ENCODE measurements at regions of chr11 and their contacts with region 1.

Region 1: GRCh38 chr11:114762408-114762807 is 84.1 kb downstream of the NXPE2 start:
- DNase-seq: peak; percentile 67
- ATAC-seq: peak; percentile 85 to 91

Region 2: GRCh38 chr11:114280696-114281095 is 481.7 kb before region 1 on chr11:
- intact Hi-C with region 1: loop called in 1 of 2 experiments (anchors 5 kb)
- DNase-seq: peak; percentile 75
- ATAC-seq: peak; percentile 93 to 94

Region 3: DNA sequence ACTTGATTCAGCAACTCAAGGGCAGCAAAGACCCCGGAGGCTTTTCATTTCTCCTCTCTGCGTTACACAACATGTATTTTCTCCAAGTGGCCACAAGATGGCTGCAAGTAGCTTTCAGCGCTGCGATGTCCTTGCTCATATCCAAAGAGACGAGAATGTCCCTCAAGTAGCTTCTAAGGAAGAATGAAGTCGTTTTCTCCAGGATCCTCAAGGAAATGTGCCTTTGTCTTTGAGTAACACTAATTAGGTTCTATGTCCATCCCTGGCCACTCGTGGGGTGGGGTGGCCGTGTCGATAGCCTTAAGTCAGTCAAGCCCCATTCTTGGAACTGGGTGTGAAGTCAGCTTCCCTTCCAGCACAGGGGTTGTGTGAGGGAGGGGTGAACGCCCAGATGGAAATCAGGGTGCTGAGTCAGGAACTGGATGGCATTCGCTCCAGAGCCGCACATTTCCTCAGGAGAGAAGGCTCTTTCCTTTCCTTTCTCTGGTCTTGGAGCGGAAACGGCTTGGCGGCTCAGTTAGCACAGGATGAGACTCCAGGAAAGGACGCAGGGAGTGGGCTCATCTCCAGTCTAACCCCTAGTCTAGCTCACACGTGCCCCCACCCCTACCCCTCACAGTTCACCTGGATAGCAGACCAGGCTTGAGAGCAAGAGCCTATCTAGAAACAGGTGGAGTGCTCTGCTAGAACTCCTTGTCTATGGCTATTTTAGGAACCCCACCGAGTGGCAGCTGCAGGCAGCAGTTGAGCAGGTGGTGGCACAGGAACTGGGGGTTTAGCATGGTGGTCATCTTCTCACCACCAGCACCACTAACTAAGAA is 421.9 kb before region 1 on chr11:
- intact Hi-C with region 1: loop called (anchors 2 to 5 kb)
- DNase-seq: peak; percentile 56
- ATAC-seq: peak; percentile 88 to 91